ENCODE measurements at regions of chr16 and their contacts with region 1.

Region 1: DNA sequence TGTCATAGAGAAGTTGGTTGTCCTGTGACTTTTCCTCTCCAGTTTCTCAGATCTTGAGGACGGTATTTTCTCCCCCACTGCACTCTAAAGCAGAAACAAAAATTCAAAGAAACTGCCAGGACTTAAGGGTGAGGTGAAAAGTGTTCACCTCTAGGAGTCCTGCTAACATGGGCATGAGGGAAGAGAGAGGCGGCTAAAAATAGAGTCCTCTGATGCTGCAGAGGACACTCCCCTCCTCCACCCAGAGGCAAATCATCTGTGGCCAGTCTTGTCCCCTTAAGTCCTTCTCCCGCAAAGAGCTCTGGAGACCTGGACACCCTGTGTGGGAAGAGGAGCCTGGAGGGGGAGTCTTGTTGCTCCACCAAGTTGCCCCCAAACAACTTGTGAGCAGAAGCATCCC is 4.7 kb upstream of the DDX19A start:
- DNase-seq: no peak
- H3K4me3 Mint-ChIP-seq: no peak overlapping the region
- H3K27ac Mint-ChIP-seq: peak overlapping the region; percentile 53
- H3K4me1 Mint-ChIP-seq: peaks cover 7% of the 10 kb centered on the region
- H3K27me3 Mint-ChIP-seq: no peaks in the 10 kb centered on the region

Region 2: DNA sequence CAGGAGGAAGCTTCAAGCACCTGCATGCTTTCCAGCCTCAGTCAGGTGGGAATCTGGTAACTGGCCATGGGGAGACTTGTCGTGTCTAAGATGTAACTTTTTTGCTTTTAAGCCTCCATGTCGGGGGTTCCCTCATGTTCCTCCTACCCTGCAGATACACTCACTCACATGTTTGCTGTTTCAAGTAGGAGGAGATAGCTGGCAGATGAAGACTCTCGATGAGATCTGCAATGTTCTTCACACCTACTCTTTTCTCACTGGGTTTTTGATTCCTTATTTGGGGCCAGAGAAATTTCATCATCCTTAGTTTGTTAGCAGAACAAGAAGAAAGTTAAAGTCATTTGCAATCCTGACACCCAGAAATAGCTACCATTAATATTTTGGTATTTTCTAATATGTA is 1184.8 kb before region 1 on chr16:
- intact Hi-C with region 1: no loop called
- DNase-seq: no peak
- H3K4me3 Mint-ChIP-seq: no peak overlapping the region
- H3K27ac Mint-ChIP-seq: peak overlapping the region; percentile 6
- H3K4me1 Mint-ChIP-seq: peaks cover 14% of the 10 kb centered on the region
- H3K27me3 Mint-ChIP-seq: no peaks in the 10 kb centered on the region

Region 3: DNA sequence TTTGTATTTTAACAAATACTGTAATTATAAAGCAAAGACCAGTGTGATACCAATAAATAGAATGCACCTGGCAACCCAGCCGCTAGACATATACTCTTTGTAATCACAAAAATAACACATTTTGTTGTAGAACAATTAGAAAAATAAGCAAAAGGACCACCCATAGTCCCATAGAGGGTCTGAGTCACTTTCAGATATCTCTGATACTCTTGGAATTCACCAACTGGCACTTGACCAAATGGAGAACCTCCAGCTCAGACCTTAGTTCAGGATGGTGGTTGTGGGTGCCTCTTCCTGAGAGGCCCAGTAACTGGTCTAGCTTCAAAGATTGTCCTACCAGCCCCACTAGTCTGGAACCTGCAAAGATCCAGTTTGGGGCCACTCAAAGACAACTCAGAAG is 955.4 kb before region 1 on chr16:
- intact Hi-C with region 1: loop called (anchors 10 kb)
- DNase-seq: no peak
- H3K4me3 Mint-ChIP-seq: no peak overlapping the region
- H3K27ac Mint-ChIP-seq: peak overlapping the region; percentile 87
- H3K4me1 Mint-ChIP-seq: peaks cover 21% of the 10 kb centered on the region
- H3K27me3 Mint-ChIP-seq: no peaks in the 10 kb centered on the region

Region 4: GRCh38 chr16:69632836-69633235 is 709.2 kb before region 1 on chr16:
- intact Hi-C with region 1: no loop called
- DNase-seq: no peak
- H3K4me3 Mint-ChIP-seq: no peak overlapping the region
- H3K27ac Mint-ChIP-seq: no peak overlapping the region
- H3K4me1 Mint-ChIP-seq: no peaks in the 10 kb centered on the region
- H3K27me3 Mint-ChIP-seq: no peaks in the 10 kb centered on the region

Region 5: DNA sequence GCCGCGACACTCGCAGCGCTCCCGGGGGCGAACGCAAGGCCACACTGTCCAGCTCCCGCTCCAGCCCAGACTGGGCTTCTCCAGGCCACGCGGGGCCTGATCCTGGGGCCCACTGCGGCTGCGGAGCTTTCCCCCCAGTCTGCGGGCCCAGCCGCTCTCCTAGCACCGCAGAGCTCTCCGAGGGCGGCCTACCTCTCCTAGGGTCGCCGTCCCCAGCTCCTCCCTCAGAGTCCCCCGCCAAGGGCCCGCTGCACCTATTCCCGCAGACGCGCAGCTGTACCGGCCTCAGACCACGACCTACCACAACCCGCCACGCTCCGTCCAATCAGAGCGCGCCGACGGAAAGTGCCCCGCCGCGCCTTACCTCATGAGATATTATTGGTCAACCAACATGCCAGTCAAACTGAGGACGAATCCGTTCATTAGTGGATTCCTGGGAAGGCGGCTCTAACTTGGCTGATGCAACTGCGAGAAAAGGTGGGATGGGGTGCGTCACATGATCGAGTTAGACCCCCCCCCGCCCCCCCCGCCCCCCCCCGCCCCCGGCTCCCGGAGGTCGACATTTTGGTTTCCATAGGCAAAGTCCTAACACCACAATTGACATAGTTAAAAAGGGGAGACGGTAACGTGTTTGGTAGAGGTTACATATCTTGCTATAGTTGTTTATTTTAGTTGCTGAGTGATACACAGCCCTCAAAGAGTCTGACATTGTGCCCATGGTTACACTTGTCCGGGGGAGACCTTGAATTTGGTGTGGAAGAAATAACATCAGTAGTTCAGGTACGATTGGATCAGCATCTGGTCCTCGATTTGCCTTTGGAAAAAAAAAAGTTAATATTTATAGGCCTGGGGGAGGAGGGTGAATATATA is 52.6 kb before region 1 on chr16 and contains the start of gene AARS1:
- intact Hi-C with region 1: loop called (anchors 2 kb)
- DNase-seq: peak; percentile 99
- H3K4me3 Mint-ChIP-seq: peak within 1 kb of the TSS; percentile 99
- H3K27ac Mint-ChIP-seq: peak within 1 kb of the TSS; percentile 99
- H3K4me1 Mint-ChIP-seq: peaks cover 22% of the 10 kb centered on the region
- H3K27me3 Mint-ChIP-seq: peaks cover 2% of the 10 kb centered on the region
- total RNA-seq, gene AARS1: 115 and 117 TPM in 2 replicates

Region 6: GRCh38 chr16:70298988-70299938 is 42.8 kb before region 1 on chr16 and contains the start of gene DDX19B:
- intact Hi-C with region 1: loop called (anchors 1 kb)
- DNase-seq: peak; percentile 92
- H3K4me3 Mint-ChIP-seq: peak within 1 kb of the TSS; percentile 94
- H3K27ac Mint-ChIP-seq: peak within 1 kb of the TSS; percentile 93
- H3K4me1 Mint-ChIP-seq: peaks cover 18% of the 10 kb centered on the region
- H3K27me3 Mint-ChIP-seq: no peaks in the 10 kb centered on the region
- total RNA-seq, gene DDX19B: 29.4 and 30.4 TPM in 2 replicates

Measured in activated CD4-positive, alpha-beta T cell treated with anti-CD3 and anti-CD28 coated beads, Interleukin-2, amount 10 ng/mL, durations not matched to agents 24 days and 14 days (primary cell).